SK-N-SH (cell line): ENCODE measurements at regions of chr9 and their contacts with region 1.

Region 1: GRCh38 chr9:129569502-129570449 is 51.1 kb downstream of the C9orf50 start:
- DNase-seq: peak; percentile 76
- H3K4me3 ChIP-seq: peak overlapping the region in 1 of 2 experiments; percentile 49; a peak in 1 of 4 replicates
- H3K27ac ChIP-seq: peak overlapping the region in 1 of 2 experiments; percentile 29; a peak in 1 of 4 replicates
- H3K4me1 ChIP-seq: peaks cover 14 to 27% of the 10 kb centered on the region in 2 experiments; a peak in 3 of 4 replicates
- H3K27me3 ChIP-seq: no peaks in the 10 kb centered on the region
- CTCF ChIP-seq: peak; percentile 51
- EP300 ChIP-seq: no peak
- RAD21 ChIP-seq: peak; percentile 58

Region 2: GRCh38 chr9:129580211-129580915 is 10.6 kb after region 1 on chr9:
- CTCF ChIA-PET with region 1: interaction called, 22 read pairs
- POLR2A ChIA-PET with region 1: no interaction called
- DNase-seq: no peak
- H3K4me3 ChIP-seq: no peak overlapping the region
- H3K27ac ChIP-seq: no peak overlapping the region
- H3K4me1 ChIP-seq: peaks cover 0 to 4% of the 10 kb centered on the region in 2 experiments; a peak in 1 of 4 replicates
- H3K27me3 ChIP-seq: no peaks in the 10 kb centered on the region
- CTCF ChIP-seq: no peak
- EP300 ChIP-seq: no peak
- RAD21 ChIP-seq: no peak